AG04449 (cell line): ENCODE measurements at regions of chr11 and their contacts with region 1.

Region 1: DNA sequence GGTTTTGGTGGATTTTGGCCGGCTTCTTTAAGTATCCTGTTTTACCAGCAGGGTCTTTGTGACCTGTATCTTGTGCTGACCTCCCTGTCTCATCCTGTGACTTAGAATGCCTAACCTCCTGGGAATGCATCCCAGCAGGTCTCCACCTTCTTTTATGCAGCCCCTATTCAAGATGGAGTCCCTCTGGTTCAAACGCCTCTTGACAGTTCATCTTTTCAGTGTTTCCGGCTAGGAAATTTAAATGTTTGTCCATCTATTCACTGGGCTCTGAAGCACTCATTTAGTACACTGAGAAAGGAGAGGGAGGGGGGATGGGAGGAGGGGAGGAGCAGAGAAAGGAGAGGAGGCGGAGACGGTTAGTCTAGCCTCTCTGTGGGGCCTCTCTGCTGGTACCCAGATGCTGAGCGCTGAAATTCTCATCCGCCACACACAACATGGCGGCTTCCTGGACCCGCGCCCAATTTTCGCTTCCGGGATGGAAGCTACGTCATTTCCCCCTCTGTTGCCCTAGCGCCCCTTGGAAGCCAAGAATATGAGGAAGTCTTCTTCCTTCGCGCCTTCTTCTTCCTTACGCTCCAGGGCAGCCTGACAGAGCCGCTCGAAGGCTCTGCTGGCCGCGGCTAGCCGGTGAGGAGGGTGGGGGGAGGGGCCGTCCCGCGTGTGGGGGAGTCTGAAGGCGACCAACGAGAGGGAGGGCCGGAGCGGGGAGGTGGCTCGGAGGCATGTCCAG is 69.0 kb upstream of the SYT13 start:
- DNase-seq: no peak
- H3K4me3 ChIP-seq: peak overlapping the region; percentile 55
- CTCF ChIP-seq: no peak

Region 2: DNA sequence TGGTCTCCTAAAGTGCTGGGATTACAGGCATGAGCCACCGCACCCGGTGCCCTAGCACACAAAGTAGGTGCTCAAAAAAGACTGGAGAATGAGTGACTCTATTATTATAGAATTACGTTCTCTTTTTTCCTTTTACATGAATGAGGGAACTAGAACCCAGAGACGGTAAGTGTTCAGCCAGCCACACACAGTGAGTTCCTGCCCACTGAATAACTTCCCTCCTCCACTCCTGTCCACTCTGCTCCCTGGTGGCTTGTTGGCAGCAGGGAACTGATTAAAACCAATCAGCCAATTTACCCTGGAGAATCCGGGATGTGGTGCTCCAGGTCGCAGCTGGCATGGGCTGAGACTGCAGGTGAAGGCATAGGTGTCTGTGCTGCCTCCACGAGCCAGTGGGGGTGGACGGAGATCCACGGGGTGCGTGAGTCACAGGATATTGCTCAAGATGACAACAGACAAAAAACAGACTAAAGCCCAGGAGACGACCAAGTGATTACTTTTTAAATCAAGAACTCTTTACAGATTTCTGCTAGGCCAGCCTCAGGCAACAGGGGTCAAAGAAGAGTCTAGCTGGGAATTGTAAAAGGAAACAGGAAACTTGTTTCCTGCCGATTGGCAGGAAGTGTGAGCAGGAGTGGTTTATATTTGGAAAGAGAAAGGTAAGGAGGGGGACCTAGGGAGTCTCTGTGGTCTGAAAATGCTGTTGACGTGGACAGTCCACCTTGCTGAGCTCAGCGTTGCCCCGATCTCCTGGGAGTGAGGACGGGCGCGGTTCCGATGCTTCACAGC is 309.3 kb before region 1 on chr11:
- CTCF ChIA-PET with region 1: no interaction called
- POLR2A ChIA-PET with region 1: no interaction called
- DNase-seq: no peak
- H3K4me3 ChIP-seq: no peak overlapping the region
- CTCF ChIP-seq: no peak

Region 3: GRCh38 chr11:45155058-45155551 is 200.0 kb before region 1 on chr11:
- CTCF ChIA-PET with region 1: no interaction called
- POLR2A ChIA-PET with region 1: no interaction called
- DNase-seq: no peak
- H3K4me3 ChIP-seq: no peak overlapping the region
- CTCF ChIP-seq: no peak

Region 4: DNA sequence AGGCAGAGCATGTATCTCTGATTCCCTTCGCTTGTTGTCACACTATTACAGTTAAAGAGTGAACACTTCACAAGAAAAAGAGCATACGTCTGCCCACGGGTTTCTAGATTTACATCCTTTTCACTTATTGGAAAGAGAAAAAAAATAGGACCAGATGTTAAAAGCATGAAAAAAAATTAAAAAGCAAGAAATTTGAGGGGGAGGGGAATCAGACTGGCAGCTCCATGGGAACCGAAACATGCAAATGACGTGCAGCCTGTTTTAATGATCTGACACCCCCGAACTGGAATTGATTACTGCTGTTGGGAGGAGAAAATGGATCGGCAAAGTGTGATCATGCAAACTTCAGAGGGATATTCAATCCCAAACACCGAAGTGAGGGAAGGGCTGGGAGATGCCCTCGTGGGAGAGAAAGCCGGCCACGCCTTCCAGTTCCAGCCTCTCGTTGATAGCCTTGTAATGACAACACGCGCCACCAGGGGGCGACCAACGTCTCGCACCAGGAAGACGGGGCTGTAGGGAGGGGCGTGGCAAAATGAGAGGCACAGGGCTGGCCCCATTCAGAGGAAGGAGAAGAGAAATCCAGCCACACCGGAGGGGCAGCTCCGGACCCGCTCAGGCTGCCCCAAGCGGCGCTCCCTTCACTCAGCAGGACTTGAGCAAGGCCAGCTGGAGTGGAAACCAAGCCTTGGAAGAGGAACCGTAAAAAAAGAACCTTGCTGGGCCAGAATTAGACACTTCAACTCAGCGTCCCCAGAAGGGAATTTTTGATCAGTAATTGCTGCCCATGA is 15.2 kb before region 1 on chr11:
- CTCF ChIA-PET with region 1: interaction called, 29 read pairs
- POLR2A ChIA-PET with region 1: no interaction called
- DNase-seq: no peak
- H3K4me3 ChIP-seq: peak overlapping the region; percentile 38
- CTCF ChIP-seq: peak; percentile 93

Region 5: DNA sequence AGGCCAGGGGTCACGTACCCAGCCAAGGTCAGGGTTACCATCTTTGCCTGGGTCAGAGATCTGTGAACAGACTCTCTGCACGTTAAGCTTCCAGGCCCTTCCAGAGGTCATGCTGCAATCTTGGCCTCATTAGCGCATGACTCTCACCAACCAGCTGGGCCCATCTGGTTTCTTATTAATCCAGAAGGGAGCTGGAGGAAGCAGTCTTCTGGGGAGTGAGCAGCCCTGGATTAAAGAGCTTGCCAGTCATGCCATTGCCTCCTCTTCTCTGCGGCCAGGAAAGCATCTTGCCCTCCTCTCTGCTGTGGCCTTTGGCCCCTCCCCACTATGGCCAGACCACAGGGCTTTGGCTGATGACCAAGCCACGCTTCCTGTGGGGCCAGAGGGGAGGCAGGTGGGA is 252.9 kb after region 1 on chr11:
- CTCF ChIA-PET with region 1: no interaction called
- POLR2A ChIA-PET with region 1: no interaction called
- DNase-seq: no peak
- H3K4me3 ChIP-seq: no peak overlapping the region
- CTCF ChIP-seq: no peak